A549 (cell line): ENCODE measurements at regions of chr16 and their contacts with region 1.

Region 1: DNA sequence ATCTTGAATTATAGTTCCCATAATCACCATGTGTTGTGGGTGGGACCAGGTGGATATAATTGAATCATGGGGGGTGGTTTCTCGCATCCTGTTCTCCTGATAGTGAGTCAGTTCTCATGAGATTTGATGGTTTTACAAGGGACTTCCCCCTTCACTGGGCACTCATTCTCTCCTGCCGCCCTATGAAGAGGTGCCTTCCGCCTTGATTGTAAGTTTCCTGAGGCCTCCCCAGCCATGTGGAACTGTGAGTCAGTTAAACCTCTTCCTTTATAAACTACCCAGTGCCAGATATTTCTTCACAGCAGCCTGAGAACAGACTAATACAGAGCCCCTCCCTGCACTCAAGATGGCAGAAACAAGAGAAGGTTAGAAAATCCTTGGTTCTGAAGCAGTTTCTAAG is 26.4 kb downstream of the LDAF1 start:
- DNase-seq: no peak
- ATAC-seq: no peak
- H3K4me3 ChIP-seq: no peak overlapping the region
- H3K27ac ChIP-seq: no peak overlapping the region
- H3K4me1 ChIP-seq: peaks cover 10% of the 10 kb centered on the region; the same call in 2 of the 3 replicates
- CTCF ChIP-seq: no peak
- EP300 ChIP-seq: no peak
- POLR2A ChIP-seq: no peak
- RAD21 ChIP-seq: no peak

Region 2: GRCh38 chr16:20944861-20945574 is 239.8 kb before region 1 on chr16:
- CTCF ChIA-PET with region 1: no interaction called
- POLR2A ChIA-PET with region 1: no interaction called
- DNase-seq: no peak
- ATAC-seq: no peak
- H3K4me3 ChIP-seq: no peak overlapping the region
- H3K27ac ChIP-seq: no peak overlapping the region
- H3K4me1 ChIP-seq: no peaks in the 10 kb centered on the region
- CTCF ChIP-seq: no peak
- EP300 ChIP-seq: no peak
- POLR2A ChIP-seq: no peak
- RAD21 ChIP-seq: 0 out of 5 replicates have a peak, but pooled peaks of 1 of the 2 experiments have one; percentile 7

Region 3: DNA sequence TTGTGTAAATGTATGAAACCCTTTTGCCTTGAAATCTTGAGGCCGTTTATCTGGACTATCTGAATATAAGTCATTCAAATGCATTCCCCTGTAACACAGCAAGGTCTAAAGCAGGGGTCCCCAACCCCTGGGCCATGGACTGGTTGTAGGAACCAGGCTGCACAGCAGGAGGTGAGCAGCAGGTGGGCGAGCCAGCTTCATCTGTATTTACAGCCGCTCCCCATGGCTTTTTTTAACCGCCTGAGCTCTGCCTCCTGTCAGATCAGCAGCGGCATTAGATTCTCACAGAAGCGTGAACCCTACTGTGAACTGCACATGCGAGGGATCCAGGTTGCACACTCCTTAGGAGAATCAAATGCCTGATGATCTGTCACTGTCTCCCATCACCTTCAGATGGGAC is 58.3 kb before region 1 on chr16:
- CTCF ChIA-PET with region 1: no interaction called
- POLR2A ChIA-PET with region 1: no interaction called
- DNase-seq: no peak
- ATAC-seq: no peak
- H3K4me3 ChIP-seq: no peak overlapping the region
- H3K27ac ChIP-seq: no peak overlapping the region
- H3K4me1 ChIP-seq: no peaks in the 10 kb centered on the region
- CTCF ChIP-seq: no peak
- EP300 ChIP-seq: no peak
- POLR2A ChIP-seq: no peak
- RAD21 ChIP-seq: no peak

Region 4: GRCh38 chr16:21167360-21167759 is 17.5 kb before region 1 on chr16:
- CTCF ChIA-PET with region 1: interaction called, 17 read pairs
- POLR2A ChIA-PET with region 1: no interaction called
- DNase-seq: peak; percentile 39 to 62
- ATAC-seq: peak; percentile 48 to 80; a peak in 5 of 6 replicates
- H3K4me3 ChIP-seq: no peak overlapping the region
- H3K27ac ChIP-seq: peak overlapping the region in 1 of 2 experiments; percentile 30; a peak in 1 of 6 replicates
- H3K4me1 ChIP-seq: peaks cover 24% of the 10 kb centered on the region; the same call in 2 of the 3 replicates
- CTCF ChIP-seq: no peak
- EP300 ChIP-seq: no peak
- POLR2A ChIP-seq: no peak
- RAD21 ChIP-seq: no peak

Region 5: DNA sequence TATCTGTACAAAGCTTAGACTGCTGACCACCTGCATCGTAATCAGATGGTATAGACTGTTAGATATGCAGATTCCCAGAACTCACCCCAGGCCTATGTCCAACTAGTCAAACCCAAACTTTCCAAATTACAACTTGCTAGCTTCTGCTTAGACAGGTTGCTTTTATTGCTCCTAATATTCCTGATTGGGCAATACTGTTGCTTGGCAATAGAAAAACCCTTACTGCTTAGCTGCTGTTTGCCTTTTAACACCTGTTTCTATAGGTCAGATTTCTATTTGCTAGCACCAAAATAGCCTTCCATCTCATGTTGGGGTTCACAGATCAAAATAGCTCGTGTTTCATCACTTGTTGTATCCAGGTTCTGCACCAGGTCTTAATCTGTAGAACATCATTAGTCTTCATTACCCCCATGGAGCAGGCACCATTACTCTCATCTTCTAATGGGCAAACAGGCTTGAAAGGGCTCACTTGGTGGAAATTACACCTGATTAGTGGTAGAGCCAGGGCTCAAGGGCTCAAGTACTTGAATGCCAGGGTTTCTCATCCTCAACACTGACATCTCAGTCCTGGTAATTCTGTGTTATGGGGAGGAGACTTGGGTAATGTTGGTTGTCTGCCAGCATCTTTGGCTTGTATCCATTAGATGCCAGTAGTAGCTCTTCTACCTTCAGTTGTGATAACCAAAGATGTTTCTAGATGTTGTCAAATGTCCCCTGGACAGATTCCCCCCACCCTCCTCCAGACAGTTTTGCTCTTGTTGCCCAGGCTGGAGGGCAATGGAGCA is 23.8 kb after region 1 on chr16:
- CTCF ChIA-PET with region 1: interaction called, 48 read pairs
- POLR2A ChIA-PET with region 1: no interaction called
- DNase-seq: no peak
- ATAC-seq: no peak
- H3K4me3 ChIP-seq: no peak overlapping the region
- H3K27ac ChIP-seq: no peak overlapping the region
- H3K4me1 ChIP-seq: no peaks in the 10 kb centered on the region
- CTCF ChIP-seq: no peak
- EP300 ChIP-seq: no peak
- POLR2A ChIP-seq: no peak
- RAD21 ChIP-seq: no peak

Region 6: GRCh38 chr16:21256636-21257035 is 71.8 kb after region 1 on chr16:
- CTCF ChIA-PET with region 1: interaction called, 18 read pairs
- POLR2A ChIA-PET with region 1: no interaction called
- DNase-seq: no peak
- ATAC-seq: no peak
- H3K4me3 ChIP-seq: no peak overlapping the region
- H3K27ac ChIP-seq: no peak overlapping the region
- H3K4me1 ChIP-seq: peaks cover 23% of the 10 kb centered on the region
- CTCF ChIP-seq: no peak
- EP300 ChIP-seq: no peak
- POLR2A ChIP-seq: no peak
- RAD21 ChIP-seq: no peak

Region 7: GRCh38 chr16:21277927-21278706 is 93.3 kb after region 1 on chr16 and contains the start of gene CRYM:
- CTCF ChIA-PET with region 1: interaction called, 160 read pairs
- POLR2A ChIA-PET with region 1: interaction called, 3 read pairs
- DNase-seq: peak; percentile 52 to 82
- ATAC-seq: peak; percentile 97 to 99
- H3K4me3 ChIP-seq: peak within 1 kb of the TSS; percentile 54
- H3K27ac ChIP-seq: peak within 1 kb of the TSS; percentile 58 to 76
- H3K4me1 ChIP-seq: no peaks in the 10 kb centered on the region
- CTCF ChIP-seq: peak; percentile 87
- EP300 ChIP-seq: no peak
- POLR2A ChIP-seq: no peak
- RAD21 ChIP-seq: peak; percentile 62 to 81
- polyA plus RNA-seq, gene CRYM: 3.1 and 3.4 TPM in 2 replicates

Region 8: GRCh38 chr16:21300309-21301167 is 115.7 kb after region 1 on chr16:
- CTCF ChIA-PET with region 1: interaction called, 114 read pairs
- POLR2A ChIA-PET with region 1: interaction called, 32 read pairs
- DNase-seq: peak; percentile 96 to 99
- ATAC-seq: peak; percentile 86 to 89
- H3K4me3 ChIP-seq: peak overlapping the region; percentile 63
- H3K27ac ChIP-seq: peak overlapping the region; percentile 82 to 93
- H3K4me1 ChIP-seq: peaks cover 30% of the 10 kb centered on the region
- CTCF ChIP-seq: peak; percentile 97
- EP300 ChIP-seq: 0 out of 5 replicates have a peak, but pooled peaks of 1 of the 2 experiments have one; percentile 7
- POLR2A ChIP-seq: peak; percentile 53
- RAD21 ChIP-seq: peak; percentile 98 to 99

Region 9: DNA sequence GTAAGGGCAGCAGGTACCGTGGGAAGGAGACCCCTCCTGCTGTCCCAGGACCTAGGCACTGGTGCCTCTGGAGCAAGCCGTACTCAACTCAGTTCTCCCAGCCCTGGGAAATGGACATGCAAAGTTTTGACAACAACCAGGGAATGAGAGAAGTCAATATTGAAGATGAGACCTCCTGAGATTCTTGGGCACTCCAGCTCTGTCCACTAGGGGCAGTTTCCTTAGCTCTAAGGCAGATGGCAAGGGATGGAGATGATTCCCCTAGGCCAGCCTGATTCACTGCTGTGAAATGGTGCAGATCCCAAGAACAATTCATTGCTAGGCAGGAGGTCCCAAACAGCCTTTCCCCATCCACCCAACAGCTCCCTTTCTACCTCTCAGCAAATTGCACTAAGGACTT is 956.9 kb after region 1 on chr16:
- CTCF ChIA-PET with region 1: no interaction called
- POLR2A ChIA-PET with region 1: no interaction called
- DNase-seq: peak; percentile 54 to 55
- ATAC-seq: peak; percentile 81 to 92
- H3K4me3 ChIP-seq: no peak overlapping the region
- H3K27ac ChIP-seq: no peak overlapping the region
- H3K4me1 ChIP-seq: no peaks in the 10 kb centered on the region
- CTCF ChIP-seq: peak; percentile 35; the same call in 2 of the 3 replicates
- EP300 ChIP-seq: no peak
- POLR2A ChIP-seq: no peak
- RAD21 ChIP-seq: 0 out of 5 replicates have a peak, but pooled peaks of 1 of the 2 experiments have one; percentile 11